CD4-positive, alpha-beta T cell (primary cell): ENCODE measurements at regions of chr5 and their contacts with region 1.

Region 1: GRCh38 chr5:154072414-154073171 is 33.8 kb downstream of the MFAP3 start:
- DNase-seq: peak; percentile 68 to 89 (median 81)
- ATAC-seq: peak; percentile 81
- H3K4me3 ChIP-seq: no peak overlapping the region
- H3K4me3 Mint-ChIP-seq: no peak overlapping the region
- H3K27ac ChIP-seq: no peak overlapping the region
- H3K27ac Mint-ChIP-seq: no peak overlapping the region
- H3K4me1 ChIP-seq: peaks cover 22% of the 10 kb centered on the region
- H3K4me1 Mint-ChIP-seq: peaks cover 17% of the 10 kb centered on the region
- H3K27me3 ChIP-seq: no peaks in the 10 kb centered on the region
- H3K27me3 Mint-ChIP-seq: no peaks in the 10 kb centered on the region
- CTCF ChIP-seq: peak; percentile 96

Region 2: GRCh38 chr5:154038707-154039457 is 33.7 kb before region 1 on chr5 and contains the starts of genes FAM114A2 and MFAP3:
- CTCF ChIA-PET with region 1: interaction called, 4 read pairs
- POLR2A ChIA-PET with region 1: interaction called, 14 read pairs
- intact Hi-C with region 1: no loop called
- DNase-seq: peak; percentile 80 to 94 (median 85)
- ATAC-seq: peak; percentile 96
- H3K4me3 ChIP-seq: peak within 1 kb of the TSS; percentile 92
- H3K4me3 Mint-ChIP-seq: peak within 1 kb of the TSS; percentile 99
- H3K27ac ChIP-seq: peak within 1 kb of the TSS; percentile 69 to 91
- H3K27ac Mint-ChIP-seq: peak within 1 kb of the TSS; percentile 98
- H3K4me1 ChIP-seq: peaks cover 13% of the 10 kb centered on the region
- H3K4me1 Mint-ChIP-seq: peaks cover 72% of the 10 kb centered on the region
- H3K27me3 ChIP-seq: no peaks in the 10 kb centered on the region
- H3K27me3 Mint-ChIP-seq: no peaks in the 10 kb centered on the region
- CTCF ChIP-seq: no peak
- total RNA-seq, gene FAM114A2: 21.9 to 23.3 TPM
- total RNA-seq, gene MFAP3: 14.9 to 17.7 TPM

Region 3: DNA sequence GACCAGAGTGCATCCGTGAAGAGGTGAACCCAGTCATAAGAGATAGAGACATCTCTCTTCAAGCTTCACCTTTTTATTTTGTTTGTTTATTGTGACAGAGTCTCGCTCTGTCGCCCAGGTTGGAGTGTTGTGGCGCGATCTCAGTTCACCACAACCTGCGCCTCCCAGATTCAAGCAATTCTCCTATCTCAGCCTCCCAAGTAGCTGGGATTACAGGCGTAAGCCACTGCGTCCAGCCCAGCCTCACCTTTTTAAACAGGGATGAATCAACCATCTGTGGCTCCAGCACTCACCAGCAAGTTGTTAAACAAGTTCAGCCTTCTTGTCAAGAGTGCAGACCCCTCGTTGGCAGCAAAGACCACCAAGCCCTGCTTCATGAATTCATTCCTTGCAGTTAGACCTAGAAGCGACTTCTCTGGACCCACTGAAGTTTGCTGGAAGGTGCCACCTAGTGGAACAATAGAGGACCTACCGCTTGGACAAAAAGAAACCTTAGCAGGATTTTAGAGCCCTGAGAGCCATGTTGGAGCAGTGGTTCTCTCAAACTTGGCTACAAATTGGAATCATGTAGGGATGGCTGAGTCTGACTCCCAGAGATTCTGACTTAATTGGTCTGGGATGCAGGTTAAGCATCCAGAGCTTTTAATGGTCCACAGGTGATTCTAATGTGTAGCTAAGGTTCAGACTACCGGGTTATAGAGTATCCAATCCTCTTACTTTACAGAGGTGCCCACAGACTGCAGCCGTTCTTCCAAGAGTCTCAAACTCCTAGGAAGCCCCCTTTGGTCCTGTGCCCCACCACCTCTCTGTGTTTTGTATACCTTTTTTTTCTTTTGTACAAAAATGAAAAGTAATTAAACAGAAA is 107.5 kb after region 1 on chr5:
- CTCF ChIA-PET with region 1: interaction called, 21 read pairs
- POLR2A ChIA-PET with region 1: no interaction called
- intact Hi-C with region 1: loop called (anchors 1 kb)
- DNase-seq: peak in 9 of 14 experiments; percentile 12 to 73 (median 38)
- ATAC-seq: peak; percentile 96
- H3K4me3 ChIP-seq: no peak overlapping the region
- H3K4me3 Mint-ChIP-seq: no peak overlapping the region
- H3K27ac ChIP-seq: no peak overlapping the region
- H3K27ac Mint-ChIP-seq: no peak overlapping the region
- H3K4me1 ChIP-seq: peaks cover 7% of the 10 kb centered on the region
- H3K4me1 Mint-ChIP-seq: no peaks in the 10 kb centered on the region
- H3K27me3 ChIP-seq: no peaks in the 10 kb centered on the region
- H3K27me3 Mint-ChIP-seq: peaks cover 4% of the 10 kb centered on the region
- CTCF ChIP-seq: peak; percentile 72

Region 4: DNA sequence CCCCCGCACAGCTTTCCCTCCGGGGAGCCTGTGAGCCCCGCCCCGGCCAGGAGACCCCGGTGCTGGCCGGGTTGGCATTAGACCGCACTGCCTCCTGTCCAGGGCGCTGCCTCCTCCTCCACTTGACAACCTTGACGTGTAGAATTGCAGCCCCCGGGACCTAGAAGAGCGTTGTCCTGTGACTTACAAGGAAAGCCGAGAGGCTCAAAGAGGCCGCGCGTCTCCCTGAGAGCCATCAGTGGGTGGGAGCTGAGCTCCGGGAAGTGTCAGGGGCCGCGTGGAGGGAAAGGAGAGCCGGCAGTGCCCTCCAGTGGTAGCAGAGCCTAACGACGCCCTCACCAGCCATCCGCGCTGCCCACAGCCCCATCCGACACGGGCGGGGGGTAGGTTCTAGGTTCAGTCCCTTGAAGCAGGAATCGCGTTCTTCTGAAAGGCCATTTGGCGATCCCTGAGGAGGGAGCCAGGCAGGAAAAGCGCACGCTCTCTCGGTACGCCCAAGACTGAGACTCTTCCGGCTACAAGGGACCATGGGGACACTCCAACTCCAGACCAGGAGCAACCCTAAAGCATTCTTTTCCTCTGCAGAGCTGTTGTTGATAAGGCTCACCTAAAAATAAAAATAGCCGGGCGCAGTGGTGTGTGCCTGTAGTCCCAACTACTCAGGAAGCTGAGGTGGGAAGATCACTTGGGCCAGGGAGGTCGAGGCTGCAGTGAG is 332.6 kb after region 1 on chr5:
- CTCF ChIA-PET with region 1: interaction called, 17 read pairs
- POLR2A ChIA-PET with region 1: interaction called, 3 read pairs
- intact Hi-C with region 1: loop called (anchors 1 kb)
- DNase-seq: peak; percentile 49 to 80 (median 60)
- ATAC-seq: peak; percentile 99
- H3K4me3 ChIP-seq: peak overlapping the region; percentile 27
- H3K4me3 Mint-ChIP-seq: peak overlapping the region; percentile 54
- H3K27ac ChIP-seq: no peak overlapping the region
- H3K27ac Mint-ChIP-seq: no peak overlapping the region
- H3K4me1 ChIP-seq: peaks cover 9% of the 10 kb centered on the region
- H3K4me1 Mint-ChIP-seq: peaks cover 14% of the 10 kb centered on the region
- H3K27me3 ChIP-seq: no peaks in the 10 kb centered on the region
- H3K27me3 Mint-ChIP-seq: no peaks in the 10 kb centered on the region
- CTCF ChIP-seq: peak; percentile 85